T-cell (primary cell): ENCODE measurements at regions of chr6 and their contacts with region 1.

Region 1: GRCh38 chr6:26156076-26156849 is 69.0 kb downstream of the HFE start:
- DNase-seq: peak; percentile 74 to 91 (median 83)
- ATAC-seq: peak; percentile 41 to 65 (median 63)
- H3K4me3 ChIP-seq: peak overlapping the region; percentile 73 to 87
- H3K4me3 Mint-ChIP-seq: peak overlapping the region; percentile 91 to 98 (median 97)
- H3K27ac ChIP-seq: peak overlapping the region; percentile 90
- H3K27ac Mint-ChIP-seq: peak overlapping the region; percentile 94 to 98
- H3K4me1 ChIP-seq: peaks cover 15 to 31% of the 10 kb centered on the region in 2 experiments
- H3K4me1 Mint-ChIP-seq: peaks cover 28 to 60% (median 40%) of the 10 kb centered on the region in 3 donors
- H3K27me3 ChIP-seq: no peaks in the 10 kb centered on the region
- H3K27me3 Mint-ChIP-seq: no peaks in the 10 kb centered on the region

Region 2: GRCh38 chr6:26087284-26088115 is 68.8 kb before region 1 on chr6 and contains the start of gene HFE:
- CTCF ChIA-PET with region 1: no interaction called
- POLR2A ChIA-PET with region 1: interaction called, 3 to 10 read pairs
- DNase-seq: peak in 20 of 35 experiments; percentile 3 to 48 (median 20)
- ATAC-seq: peak; percentile 13 to 33 (median 20)
- H3K4me3 ChIP-seq: peak within 1 kb of the TSS; percentile 61 to 92
- H3K4me3 Mint-ChIP-seq: peak within 1 kb of the TSS; percentile 86 to 87 (median 86)
- H3K27ac ChIP-seq: peak within 1 kb of the TSS; percentile 60
- H3K27ac Mint-ChIP-seq: peak within 1 kb of the TSS; percentile 86 to 90
- H3K4me1 ChIP-seq: peaks cover 17 to 31% of the 10 kb centered on the region in 2 experiments
- H3K4me1 Mint-ChIP-seq: peaks cover 31 to 49% (median 32%) of the 10 kb centered on the region in 3 donors
- H3K27me3 ChIP-seq: no peaks in the 10 kb centered on the region
- H3K27me3 Mint-ChIP-seq: no peaks in the 10 kb centered on the region
- total RNA-seq, gene HFE: 1.0 to 2.4 (median 1.8) TPM

Region 3: GRCh38 chr6:26183581-26184366 is 27.5 kb after region 1 on chr6:
- CTCF ChIA-PET with region 1: interaction called in 1 of 2 experiments, 8 read pairs
- POLR2A ChIA-PET with region 1: interaction called, 27 to 84 read pairs
- DNase-seq: peak in 25 of 35 experiments; percentile 20 to 85 (median 42)
- ATAC-seq: peak; percentile 87 to 91 (median 89)
- H3K4me3 ChIP-seq: peak overlapping the region; percentile 57 to 83
- H3K4me3 Mint-ChIP-seq: peak overlapping the region; percentile 88 to 96 (median 93)
- H3K27ac ChIP-seq: peak overlapping the region; percentile 76
- H3K27ac Mint-ChIP-seq: peak overlapping the region; percentile 94 to 98
- H3K4me1 ChIP-seq: peaks cover 12 to 30% of the 10 kb centered on the region in 2 experiments
- H3K4me1 Mint-ChIP-seq: peaks cover 42 to 48% (median 46%) of the 10 kb centered on the region in 3 donors
- H3K27me3 ChIP-seq: no peaks in the 10 kb centered on the region
- H3K27me3 Mint-ChIP-seq: no peaks in the 10 kb centered on the region

Region 4: GRCh38 chr6:26223650-26224546 is 67.6 kb after region 1 on chr6:
- CTCF ChIA-PET with region 1: interaction called in 1 of 2 experiments, 3 read pairs
- POLR2A ChIA-PET with region 1: interaction called in 1 of 2 experiments, 14 read pairs
- DNase-seq: peak in 34 of 35 experiments; percentile 36 to 84 (median 58)
- ATAC-seq: peak; percentile 87 to 90 (median 89)
- H3K4me3 ChIP-seq: peak overlapping the region; percentile 58 to 92
- H3K4me3 Mint-ChIP-seq: no peak overlapping the region
- H3K27ac ChIP-seq: peak overlapping the region; percentile 95
- H3K27ac Mint-ChIP-seq: no peak overlapping the region
- H3K4me1 ChIP-seq: peaks cover 10 to 13% of the 10 kb centered on the region in 2 experiments
- H3K4me1 Mint-ChIP-seq: peaks cover 5 to 14% (median 14%) of the 10 kb centered on the region in 3 donors
- H3K27me3 ChIP-seq: no peaks in the 10 kb centered on the region
- H3K27me3 Mint-ChIP-seq: no peaks in the 10 kb centered on the region

Region 5: DNA sequence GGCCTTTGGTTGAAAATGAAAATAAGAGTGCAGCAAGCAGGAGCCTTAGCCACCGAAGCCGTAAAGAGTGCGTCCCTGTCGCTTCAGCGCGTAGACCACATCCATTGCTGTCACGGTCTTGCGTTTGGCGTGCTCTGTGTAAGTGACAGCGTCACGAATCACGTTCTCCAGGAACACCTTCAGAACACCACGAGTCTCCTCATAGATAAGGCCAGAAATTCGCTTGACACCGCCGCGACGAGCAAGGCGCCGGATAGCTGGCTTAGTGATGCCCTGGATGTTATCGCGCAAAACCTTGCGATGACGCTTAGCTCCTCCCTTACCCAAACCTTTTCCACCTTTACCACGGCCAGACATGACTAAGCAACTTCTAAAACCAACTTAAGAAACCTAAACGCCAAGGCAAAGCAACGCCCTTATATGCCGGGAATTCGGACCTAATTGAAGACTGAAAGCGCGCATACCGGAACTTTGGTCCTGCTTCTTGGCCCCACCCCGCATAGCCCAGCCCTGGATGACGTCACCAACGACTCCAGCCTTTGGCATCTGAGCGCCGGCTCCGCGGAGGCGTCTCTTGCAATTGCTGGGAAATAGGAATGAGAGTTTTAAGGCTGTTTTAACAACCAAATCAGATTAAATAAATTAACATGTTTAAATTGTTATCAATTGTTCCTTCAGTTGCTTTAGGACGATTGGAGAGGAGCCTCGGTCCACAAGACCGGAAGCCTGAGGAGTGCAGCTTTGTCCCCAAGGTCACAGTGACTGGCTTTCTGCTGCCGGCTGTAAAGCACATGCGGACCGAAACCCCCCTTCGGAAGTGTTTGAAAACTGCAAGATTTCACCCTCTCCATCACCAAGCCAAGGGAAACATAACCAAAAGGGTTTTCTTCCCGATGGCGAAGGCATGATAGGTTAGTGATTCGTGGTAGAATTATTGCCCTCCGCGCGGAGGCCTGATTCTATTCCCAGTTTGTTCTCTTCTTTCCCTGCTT is 129.2 kb after region 1 on chr6:
- CTCF ChIA-PET with region 1: interaction called, 3 to 5 read pairs
- POLR2A ChIA-PET with region 1: interaction called, 3 to 11 read pairs
- DNase-seq: peak; percentile 86 to 97 (median 91)
- ATAC-seq: peak; percentile 77 to 87 (median 80)
- H3K4me3 ChIP-seq: peak overlapping the region; percentile 50 to 84
- H3K4me3 Mint-ChIP-seq: peak overlapping the region; percentile 84 to 92 (median 88)
- H3K27ac ChIP-seq: peak overlapping the region; percentile 81
- H3K27ac Mint-ChIP-seq: peak overlapping the region; percentile 92 to 93
- H3K4me1 ChIP-seq: peaks cover 14 to 19% of the 10 kb centered on the region in 2 experiments
- H3K4me1 Mint-ChIP-seq: peaks cover 30 to 41% (median 31%) of the 10 kb centered on the region in 3 donors
- H3K27me3 ChIP-seq: no peaks in the 10 kb centered on the region
- H3K27me3 Mint-ChIP-seq: peaks cover 4 to 5% of the 10 kb centered on the region in 2 donors